HepG2 (cell line): ENCODE measurements at regions of chr12 and their contacts with region 1.

Region 1: DNA sequence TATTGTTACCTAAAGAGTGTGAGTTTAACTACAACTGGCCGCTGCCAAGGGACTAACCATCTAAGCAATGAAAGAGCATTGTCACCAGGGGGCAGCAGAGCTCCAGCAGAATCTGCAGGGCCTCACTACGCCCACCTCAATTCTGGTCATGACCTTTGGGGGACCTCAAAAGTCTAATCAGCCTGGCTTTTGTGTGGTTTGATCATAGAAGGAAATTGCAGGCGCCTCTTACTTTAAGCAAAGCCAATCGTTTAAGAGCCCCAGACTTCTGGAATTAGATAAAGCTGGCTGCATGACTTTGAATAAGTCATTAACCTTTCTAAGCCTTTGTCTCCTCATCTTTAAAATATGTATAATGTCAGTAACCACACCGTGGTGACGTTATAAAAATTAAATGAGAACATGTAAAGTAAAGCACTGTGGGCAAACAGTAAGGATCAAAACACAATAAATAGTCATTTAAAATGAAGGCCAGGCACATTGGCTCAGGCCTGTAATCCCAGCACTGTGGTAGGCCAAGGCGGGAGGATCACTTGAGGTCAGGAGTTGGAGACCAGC is 58.6 kb downstream of the TBX3 start:
- DNase-seq: peak; percentile 74
- ATAC-seq: peak; percentile 95
- H3K4me3 ChIP-seq: no peak overlapping the region
- H3K27ac ChIP-seq: no peak overlapping the region
- H3K4me1 ChIP-seq: peaks cover 35% of the 10 kb centered on the region
- H3K27me3 ChIP-seq: no peaks in the 10 kb centered on the region
- CTCF ChIP-seq: peak; percentile 92
- EP300 ChIP-seq: no peak
- POLR2A ChIP-seq: no peak
- RAD21 ChIP-seq: peak; percentile 90

Region 2: GRCh38 chr12:115752913-115753726 is 1127.7 kb after region 1 on chr12:
- CTCF ChIA-PET with region 1: interaction called, 11 read pairs
- POLR2A ChIA-PET with region 1: no interaction called
- in situ Hi-C with region 1: loop called (anchors 10 kb)
- intact Hi-C with region 1: loop called (anchors 1 kb)
- DNase-seq: peak; percentile 58
- ATAC-seq: peak; percentile 82
- H3K4me3 ChIP-seq: no peak overlapping the region
- H3K27ac ChIP-seq: no peak overlapping the region
- H3K4me1 ChIP-seq: peaks cover 8% of the 10 kb centered on the region; the same call in 1 of the 2 replicates
- H3K27me3 ChIP-seq: peaks cover 0 to 16% of the 10 kb centered on the region in 2 experiments; a peak in 3 of 5 replicates
- CTCF ChIP-seq: peak; percentile 79
- EP300 ChIP-seq: no peak
- POLR2A ChIP-seq: no peak
- RAD21 ChIP-seq: peak; percentile 59; the same call in 1 of the 2 replicates